ENCODE measurements at regions of chr19 and their contacts with region 1.

Region 1: GRCh38 chr19:49097455-49098288 is 12.4 kb downstream of the SNRNP70 start:
- DNase-seq: peak; percentile 93
- H3K4me3 Mint-ChIP-seq: no peak overlapping the region
- H3K27ac Mint-ChIP-seq: peak overlapping the region; percentile 20
- H3K4me1 Mint-ChIP-seq: peaks cover 6% of the 10 kb centered on the region
- H3K27me3 Mint-ChIP-seq: no peaks in the 10 kb centered on the region

Region 2: GRCh38 chr19:49200238-49200862 is 102.7 kb after region 1 on chr19:
- intact Hi-C with region 1: loop called (anchors 2 kb)
- DNase-seq: no peak
- H3K4me3 Mint-ChIP-seq: no peak overlapping the region
- H3K27ac Mint-ChIP-seq: no peak overlapping the region
- H3K4me1 Mint-ChIP-seq: peaks cover 4% of the 10 kb centered on the region
- H3K27me3 Mint-ChIP-seq: peaks cover 3% of the 10 kb centered on the region